ENCODE measurements at regions of chr7 and their contacts with region 1.

Region 1: GRCh38 chr7:135170274-135170997 is at the start of gene CYREN:
- DNase-seq: peak; percentile 71
- ATAC-seq: peak; percentile 99
- H3K4me3 ChIP-seq: peak within 1 kb of the TSS; percentile 97
- H3K27ac ChIP-seq: peak within 1 kb of the TSS; percentile 96
- H3K4me1 ChIP-seq: peaks cover 10% of the 10 kb centered on the region
- H3K27me3 ChIP-seq: no peaks in the 10 kb centered on the region
- CTCF ChIP-seq: peak; percentile 93
- total RNA-seq, gene CYREN: 49.6 TPM

Region 2: GRCh38 chr7:134986363-134987251 is 183.8 kb before region 1 on chr7 and contains the start of gene AGBL3:
- CTCF ChIA-PET with region 1: interaction called, 3 read pairs
- POLR2A ChIA-PET with region 1: no interaction called
- in situ Hi-C with region 1: no loop called
- intact Hi-C with region 1: loop called (anchors 2 kb)
- DNase-seq: peak; percentile 91
- ATAC-seq: peak; percentile 100
- H3K4me3 ChIP-seq: peak within 1 kb of the TSS; percentile 97 to 99
- H3K27ac ChIP-seq: peak within 1 kb of the TSS; percentile 89
- H3K4me1 ChIP-seq: peaks cover 15% of the 10 kb centered on the region
- H3K27me3 ChIP-seq: no peaks in the 10 kb centered on the region
- CTCF ChIP-seq: peak; percentile 90
- total RNA-seq, gene AGBL3: 2.5 TPM

Region 3: DNA sequence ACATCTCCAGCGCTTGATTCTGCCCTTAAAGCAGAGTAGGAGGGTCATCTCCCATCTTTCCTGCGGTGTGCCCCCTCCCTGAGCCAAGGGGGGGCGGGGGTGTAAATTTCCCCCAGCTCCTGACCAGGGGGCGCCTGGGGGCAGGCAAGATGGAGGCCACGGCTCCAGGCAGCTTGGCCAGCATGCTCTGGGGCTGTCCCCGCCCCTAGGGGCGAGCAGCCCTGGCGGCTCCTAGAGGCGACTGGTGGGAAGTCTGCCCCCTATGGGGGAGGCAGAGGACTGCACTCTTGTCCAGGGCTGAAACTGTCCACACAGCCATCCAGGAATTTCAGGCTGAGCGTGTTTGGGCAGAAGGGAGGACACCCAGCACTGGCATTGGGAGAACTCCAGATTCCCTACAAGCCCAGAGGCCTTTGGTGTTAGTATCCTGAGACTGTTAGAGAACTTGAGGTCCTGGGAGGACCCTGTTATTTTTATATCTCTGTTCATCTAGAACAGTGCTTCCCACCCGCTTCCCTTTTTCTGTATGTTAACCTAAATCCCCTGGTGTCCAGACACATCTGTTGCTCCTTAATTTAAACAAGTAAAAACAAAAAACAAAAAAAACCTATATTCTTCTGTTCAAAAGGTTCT is 67.8 kb after region 1 on chr7:
- CTCF ChIA-PET with region 1: no interaction called
- POLR2A ChIA-PET with region 1: no interaction called
- in situ Hi-C with region 1: no loop called
- intact Hi-C with region 1: loop called (anchors 10 kb)
- DNase-seq: no peak
- ATAC-seq: peak; percentile 64
- H3K4me3 ChIP-seq: no peak overlapping the region
- H3K27ac ChIP-seq: no peak overlapping the region
- H3K4me1 ChIP-seq: no peaks in the 10 kb centered on the region
- H3K27me3 ChIP-seq: no peaks in the 10 kb centered on the region
- CTCF ChIP-seq: peak; percentile 77; the same call in 1 of the 2 replicates